Activated B cell treated with CpG ODN at 0.5 μM for 24 hours (primary cell): ENCODE measurements at regions of chr20 and their contacts with region 1.

Region 1: GRCh38 chr20:35092524-35093266 is at the start of gene TRPC4AP:
- DNase-seq: peak; percentile 87
- ATAC-seq: peak; percentile 97
- H3K4me3 Mint-ChIP-seq: peak within 1 kb of the TSS; percentile 95
- H3K27ac Mint-ChIP-seq: peak within 1 kb of the TSS; percentile 91
- H3K4me1 Mint-ChIP-seq: peaks cover 49% of the 10 kb centered on the region
- H3K27me3 Mint-ChIP-seq: no peaks in the 10 kb centered on the region
- CTCF ChIP-seq: peak; percentile 34
- total RNA-seq, gene TRPC4AP: 58.3 and 60.2 TPM in 2 replicates

Region 2: GRCh38 chr20:34806255-34806654 is 286.4 kb before region 1 on chr20:
- CTCF ChIA-PET with region 1: no interaction called
- POLR2A ChIA-PET with region 1: no interaction called
- intact Hi-C with region 1: no loop called
- DNase-seq: no peak
- ATAC-seq: no peak
- H3K4me3 Mint-ChIP-seq: no peak overlapping the region
- H3K27ac Mint-ChIP-seq: no peak overlapping the region
- H3K4me1 Mint-ChIP-seq: peaks cover 21% of the 10 kb centered on the region
- H3K27me3 Mint-ChIP-seq: no peaks in the 10 kb centered on the region
- CTCF ChIP-seq: no peak

Region 3: DNA sequence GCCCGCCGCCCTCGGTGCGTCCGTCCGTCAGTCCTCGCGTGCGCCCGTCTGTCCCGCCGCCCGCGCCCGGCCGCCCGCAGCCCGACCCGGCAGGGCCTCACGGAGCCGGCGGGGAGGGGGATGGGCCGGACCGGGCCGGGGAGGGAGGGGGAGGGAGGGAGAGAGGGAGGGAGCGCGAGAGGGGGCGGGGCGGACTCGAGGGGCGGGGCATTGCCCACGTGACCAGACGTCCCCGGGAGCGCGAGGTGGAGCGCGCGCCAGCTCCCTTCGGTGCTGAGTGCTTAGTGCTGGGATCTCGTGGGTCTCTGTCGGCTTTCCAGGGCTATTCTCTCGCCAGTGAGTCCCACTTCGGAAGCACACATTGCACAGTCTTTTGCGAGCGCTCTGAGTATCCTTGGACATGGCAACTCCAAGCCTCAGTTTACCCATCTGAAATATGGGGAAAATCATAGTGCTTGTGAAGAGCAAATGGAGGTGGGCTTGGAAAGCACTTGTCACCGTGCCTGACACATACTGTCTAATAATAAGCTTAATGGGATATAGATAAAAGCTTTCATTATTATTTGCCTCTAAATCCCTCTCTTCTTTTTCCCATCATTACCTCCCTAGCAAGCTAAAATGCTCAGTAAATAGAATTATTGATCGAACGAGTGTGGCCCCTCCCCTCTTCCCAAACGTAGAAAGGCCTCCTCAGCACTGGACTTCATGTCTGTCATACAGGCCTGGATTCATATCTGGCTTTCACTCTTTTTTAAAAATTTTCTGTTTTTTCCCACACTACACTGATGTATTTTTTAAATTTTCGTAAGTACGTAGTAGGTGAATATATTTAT is 266.9 kb before region 1 on chr20 and contains the start of gene NCOA6:
- CTCF ChIA-PET with region 1: interaction called, 3 read pairs
- POLR2A ChIA-PET with region 1: no interaction called
- intact Hi-C with region 1: loop called (anchors 2 kb)
- DNase-seq: peak; percentile 78
- ATAC-seq: peak; percentile 74
- H3K4me3 Mint-ChIP-seq: peak within 1 kb of the TSS; percentile 97
- H3K27ac Mint-ChIP-seq: peak within 1 kb of the TSS; percentile 90
- H3K4me1 Mint-ChIP-seq: peaks cover 41% of the 10 kb centered on the region
- H3K27me3 Mint-ChIP-seq: no peaks in the 10 kb centered on the region
- CTCF ChIP-seq: no peak
- total RNA-seq, gene NCOA6: 23.7 and 24.0 TPM in 2 replicates

Region 4: DNA sequence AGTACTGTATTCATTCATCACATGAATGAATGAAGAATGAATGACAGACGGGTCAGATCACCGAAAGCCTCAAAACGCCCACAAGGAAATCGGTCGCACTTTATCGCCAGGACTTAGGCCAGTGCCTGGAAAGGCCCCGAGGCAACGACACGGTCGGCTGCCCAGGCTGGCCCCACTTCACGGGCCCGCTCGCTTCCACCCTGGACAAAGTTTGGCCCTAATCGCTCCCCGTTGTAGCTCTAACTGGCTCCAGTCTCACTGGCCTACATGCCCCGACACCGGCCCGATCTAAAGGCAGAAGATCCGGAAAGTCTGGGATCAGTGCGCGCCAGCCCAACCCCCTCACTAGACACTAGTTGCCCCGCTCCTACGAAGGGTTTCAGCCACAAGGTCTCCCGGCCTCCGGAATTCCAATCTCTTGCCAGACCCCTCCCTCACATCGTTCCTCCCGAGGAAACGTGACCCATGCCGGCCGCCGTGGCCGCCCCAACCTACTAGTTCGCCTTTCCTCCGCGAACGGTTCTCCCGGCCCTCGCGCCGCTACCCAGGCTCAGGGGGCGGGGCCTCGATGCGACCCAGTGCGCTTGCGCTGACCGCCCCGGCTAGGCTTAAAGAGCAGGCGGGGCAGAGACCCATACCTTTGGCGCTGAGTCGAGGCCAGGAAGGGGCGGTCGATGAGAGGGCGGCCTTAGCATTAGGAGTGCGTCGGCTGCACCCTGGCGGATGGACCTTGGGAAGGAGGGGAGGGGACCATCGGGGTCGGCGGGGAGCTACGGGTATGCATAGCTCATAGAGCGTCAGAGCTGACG is 137.3 kb before region 1 on chr20 and contains the starts of genes GSS and MYH7B:
- CTCF ChIA-PET with region 1: no interaction called
- POLR2A ChIA-PET with region 1: no interaction called
- intact Hi-C with region 1: loop called (anchors 2 kb)
- DNase-seq: peak; percentile 98
- ATAC-seq: peak; percentile 95
- H3K4me3 Mint-ChIP-seq: peak within 1 kb of the TSS; percentile 97
- H3K27ac Mint-ChIP-seq: peak within 1 kb of the TSS; percentile 83
- H3K4me1 Mint-ChIP-seq: peaks cover 26% of the 10 kb centered on the region
- H3K27me3 Mint-ChIP-seq: no peaks in the 10 kb centered on the region
- CTCF ChIP-seq: no peak
- total RNA-seq, gene GSS: 26.1 and 27.5 TPM in 2 replicates
- total RNA-seq, gene MYH7B: 0.20 and 0.35 TPM in 2 replicates

Region 5: GRCh38 chr20:35055445-35056276 is 37.0 kb before region 1 on chr20:
- CTCF ChIA-PET with region 1: interaction called, 9 read pairs
- POLR2A ChIA-PET with region 1: interaction called, 7 read pairs
- intact Hi-C with region 1: loop called (anchors 1 kb)
- DNase-seq: no peak
- ATAC-seq: peak; percentile 78
- H3K4me3 Mint-ChIP-seq: peak overlapping the region; percentile 74
- H3K27ac Mint-ChIP-seq: peak overlapping the region; percentile 93
- H3K4me1 Mint-ChIP-seq: peaks cover 21% of the 10 kb centered on the region
- H3K27me3 Mint-ChIP-seq: no peaks in the 10 kb centered on the region
- CTCF ChIP-seq: no peak

Region 6: GRCh38 chr20:35207950-35208611 is 115.4 kb after region 1 on chr20:
- CTCF ChIA-PET with region 1: interaction called, 37 read pairs
- POLR2A ChIA-PET with region 1: interaction called, 6 read pairs
- intact Hi-C with region 1: loop called (anchors 1 kb)
- DNase-seq: peak; percentile 42
- ATAC-seq: peak; percentile 85
- H3K4me3 Mint-ChIP-seq: no peak overlapping the region
- H3K27ac Mint-ChIP-seq: no peak overlapping the region
- H3K4me1 Mint-ChIP-seq: no peaks in the 10 kb centered on the region
- H3K27me3 Mint-ChIP-seq: no peaks in the 10 kb centered on the region
- CTCF ChIP-seq: no peak

Region 7: DNA sequence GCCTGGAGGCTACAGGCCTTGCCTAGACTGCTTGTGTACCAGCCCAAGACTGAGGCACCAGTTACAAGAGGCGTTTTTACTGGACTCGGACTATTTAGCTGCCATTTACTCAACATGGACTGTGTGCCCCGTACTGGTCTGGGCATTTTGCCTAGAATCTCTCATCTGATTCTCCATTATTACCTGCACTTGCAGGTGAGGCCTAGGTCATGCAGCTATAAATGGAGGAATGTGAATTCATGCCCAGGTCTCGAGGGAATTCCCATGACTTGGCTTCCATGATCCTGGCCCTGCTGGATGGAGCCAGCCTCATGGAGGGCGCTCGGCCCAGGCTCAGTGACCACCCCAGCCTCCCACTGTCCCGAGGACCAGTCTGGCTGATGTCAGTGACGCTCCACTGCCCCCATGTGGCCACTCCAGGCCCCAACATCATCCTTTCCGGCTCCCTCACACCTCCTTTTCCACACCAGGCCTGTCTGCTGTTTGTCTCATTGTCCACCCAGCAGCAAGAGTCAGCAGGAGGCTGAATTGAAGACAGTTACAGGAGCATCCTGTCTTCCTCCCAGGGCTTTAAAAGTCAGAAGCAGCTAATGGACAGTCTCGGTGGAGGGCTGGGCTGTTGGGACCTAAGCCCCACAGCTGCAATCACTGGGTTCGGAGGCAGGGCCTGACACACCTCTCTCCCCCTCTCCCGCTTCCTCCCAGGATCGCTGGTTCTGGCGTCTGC is 176.5 kb after region 1 on chr20:
- CTCF ChIA-PET with region 1: interaction called, 3 read pairs
- POLR2A ChIA-PET with region 1: interaction called, 3 read pairs
- intact Hi-C with region 1: loop called (anchors 1 kb)
- DNase-seq: peak; percentile 32
- ATAC-seq: peak; percentile 86
- H3K4me3 Mint-ChIP-seq: no peak overlapping the region
- H3K27ac Mint-ChIP-seq: no peak overlapping the region
- H3K4me1 Mint-ChIP-seq: no peaks in the 10 kb centered on the region
- H3K27me3 Mint-ChIP-seq: no peaks in the 10 kb centered on the region
- CTCF ChIP-seq: no peak

Region 8: DNA sequence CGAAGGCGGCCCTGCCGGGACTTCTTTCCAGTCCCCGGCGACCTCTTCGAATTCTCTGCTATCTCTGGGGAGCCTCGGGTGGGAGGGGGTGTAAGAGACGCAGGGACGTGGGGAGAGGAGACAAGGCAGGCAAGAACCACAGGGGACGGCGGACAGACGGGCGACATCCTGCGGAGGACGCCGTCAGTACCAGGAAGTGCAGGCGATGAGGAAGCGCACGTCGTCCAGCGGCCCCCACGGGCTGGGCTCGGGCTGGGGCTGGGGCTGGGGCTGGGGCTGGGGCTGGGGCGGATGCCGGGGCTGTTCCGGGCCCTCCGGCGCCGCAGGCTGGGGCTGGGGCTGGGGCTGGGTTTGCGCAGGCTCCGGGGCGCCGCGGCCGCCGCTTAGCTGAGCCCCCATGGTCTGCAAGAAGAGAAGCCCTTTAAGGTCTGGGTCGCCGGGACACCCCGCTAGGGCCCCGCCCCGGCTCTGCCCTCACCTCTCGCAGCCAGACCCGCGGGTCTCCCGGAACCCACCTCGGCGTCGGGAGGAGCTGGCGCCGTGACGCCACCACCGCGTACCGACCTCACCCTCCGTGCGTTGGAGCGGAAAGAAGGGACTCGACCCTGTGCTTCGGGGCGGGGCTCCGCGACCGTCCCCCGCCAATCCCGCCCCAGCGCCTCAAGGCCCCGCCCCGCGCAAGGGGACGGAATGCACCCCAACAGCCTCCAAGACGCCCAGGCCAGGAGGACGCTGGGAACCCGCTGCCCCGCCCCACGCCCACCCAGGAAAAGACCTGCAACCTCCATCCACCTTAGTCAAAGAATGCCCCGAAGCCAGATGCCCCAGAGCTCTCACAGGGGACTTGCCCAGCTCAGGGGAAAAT is 185.1 kb after region 1 on chr20 and contains the start of gene MMP24OS:
- CTCF ChIA-PET with region 1: no interaction called
- POLR2A ChIA-PET with region 1: interaction called, 4 read pairs
- intact Hi-C with region 1: loop called (anchors 2 kb)
- DNase-seq: peak; percentile 85
- ATAC-seq: peak; percentile 90
- H3K4me3 Mint-ChIP-seq: peak within 1 kb of the TSS; percentile 97
- H3K27ac Mint-ChIP-seq: peak within 1 kb of the TSS; percentile 99
- H3K4me1 Mint-ChIP-seq: peaks cover 31% of the 10 kb centered on the region
- H3K27me3 Mint-ChIP-seq: no peaks in the 10 kb centered on the region
- CTCF ChIP-seq: no peak
- total RNA-seq, gene MMP24OS: 39.2 and 47.9 TPM in 2 replicates